ENCODE measurements at regions of chr12 and their contacts with region 1.

Region 1: GRCh38 chr12:42156232-42156631 is 11.6 kb upstream of the GXYLT1 start:
- DNase-seq: peak; percentile 83

Region 2: GRCh38 chr12:42076976-42077375 is 79.3 kb before region 1 on chr12:
- in situ Hi-C with region 1: no loop called
- DNase-seq: no peak

Region 3: DNA sequence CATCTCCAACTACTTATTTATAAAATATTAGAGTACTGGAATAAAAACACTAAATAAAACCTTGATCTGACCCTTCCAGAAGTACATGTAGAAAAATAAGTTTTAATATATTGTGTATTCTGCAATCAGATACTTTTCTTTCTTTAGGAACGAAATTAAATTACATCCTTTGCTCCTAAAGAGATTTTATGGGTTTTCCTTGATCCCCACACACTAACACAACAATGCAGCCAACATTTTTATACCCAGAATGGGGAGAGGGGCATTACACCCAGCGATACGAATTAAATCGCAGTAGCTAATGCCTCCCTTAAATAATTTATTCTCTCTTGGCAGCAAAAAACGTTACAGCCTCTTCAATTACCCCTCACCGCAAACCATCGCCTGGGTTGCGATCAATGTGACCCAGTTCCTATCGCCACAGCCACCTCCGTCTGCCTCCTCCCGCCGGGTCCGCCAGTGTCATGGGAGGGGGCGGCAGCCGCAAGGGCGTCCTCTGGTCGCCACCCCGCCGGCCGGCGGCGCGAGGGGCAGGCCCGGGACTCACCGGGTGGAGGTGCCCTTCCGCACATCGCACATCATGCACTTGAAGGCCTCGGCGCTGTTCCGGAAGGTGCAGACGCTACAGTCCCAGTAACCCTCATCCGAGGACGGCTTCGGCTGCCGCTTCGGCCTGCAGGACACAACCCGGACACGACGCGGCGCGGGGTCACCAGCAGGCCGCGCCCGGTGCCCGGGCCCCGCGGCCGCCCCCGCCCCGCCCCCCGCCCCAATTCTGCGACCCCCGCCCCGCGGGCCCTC is 81.0 kb after region 1 on chr12:
- in situ Hi-C with region 1: loop called (anchors 10 kb)
- DNase-seq: peak; percentile 71